PC-9 (cell line): ENCODE measurements at regions of chr6 and their contacts with region 1.

Region 1: GRCh38 chr6:16770701-16771569 is 9.7 kb upstream of the ATXN1 start:
- DNase-seq: peak; percentile 42 to 57
- H3K4me3 ChIP-seq: no peak overlapping the region; the same call in 1 of the 2 replicates
- H3K27ac ChIP-seq: peak overlapping the region; percentile 97
- H3K4me1 ChIP-seq: peaks cover 53% of the 10 kb centered on the region
- H3K27me3 ChIP-seq: no peaks in the 10 kb centered on the region
- CTCF ChIP-seq: peak; percentile 80

Region 2: GRCh38 chr6:16319813-16320532 is 451.0 kb before region 1 on chr6:
- CTCF ChIA-PET with region 1: interaction called, 11 read pairs
- POLR2A ChIA-PET with region 1: no interaction called
- intact Hi-C with region 1: no loop called
- DNase-seq: peak; percentile 61 to 68
- H3K4me3 ChIP-seq: peak overlapping the region; percentile 29; the same call in 1 of the 2 replicates
- H3K27ac ChIP-seq: no peak overlapping the region
- H3K4me1 ChIP-seq: peaks cover 16% of the 10 kb centered on the region
- H3K27me3 ChIP-seq: no peaks in the 10 kb centered on the region
- CTCF ChIP-seq: no peak

Region 3: DNA sequence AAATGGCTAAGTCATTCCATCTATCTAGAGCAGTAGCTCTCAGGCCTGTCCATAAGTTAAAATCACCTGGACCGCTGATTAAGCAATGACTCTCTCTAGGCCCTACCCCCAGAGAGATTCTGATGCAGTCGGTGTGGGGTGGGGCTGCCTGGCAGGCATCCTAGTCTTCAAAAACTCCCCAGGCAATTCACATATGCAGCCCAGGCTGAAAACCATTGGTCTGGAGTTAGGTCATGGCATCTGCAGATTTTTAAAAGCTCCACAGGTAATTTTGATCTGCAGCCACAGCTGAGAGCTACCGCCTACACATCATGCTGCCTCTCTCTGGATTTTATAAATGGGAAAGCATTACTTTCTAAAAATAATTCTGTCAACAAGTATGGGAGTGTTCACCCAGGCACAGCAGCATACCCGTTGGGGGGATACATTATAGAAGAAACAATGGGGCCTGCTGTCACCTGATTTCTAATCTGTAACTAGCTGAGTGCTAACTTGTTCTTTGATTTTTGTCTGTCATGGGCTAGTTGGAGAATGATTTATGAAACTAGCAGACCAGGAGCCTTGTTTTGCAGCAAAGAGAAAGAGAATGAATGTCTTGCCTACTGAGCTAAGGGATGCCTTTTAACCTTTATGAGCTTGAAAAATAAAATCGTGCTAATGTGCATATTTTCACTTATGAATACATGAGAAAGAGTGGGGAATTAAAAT is 34.5 kb after region 1 on chr6:
- CTCF ChIA-PET with region 1: no interaction called
- POLR2A ChIA-PET with region 1: no interaction called
- intact Hi-C with region 1: loop called (anchors 5 kb)
- DNase-seq: peak in 1 of 2 experiments; percentile 63
- H3K4me3 ChIP-seq: no peak overlapping the region
- H3K27ac ChIP-seq: no peak overlapping the region
- H3K4me1 ChIP-seq: peaks cover 13% of the 10 kb centered on the region
- H3K27me3 ChIP-seq: no peaks in the 10 kb centered on the region
- CTCF ChIP-seq: no peak

Region 4: GRCh38 chr6:16849280-16849987 is 78.5 kb after region 1 on chr6:
- CTCF ChIA-PET with region 1: no interaction called
- POLR2A ChIA-PET with region 1: no interaction called
- intact Hi-C with region 1: loop called (anchors 1 kb)
- DNase-seq: peak; percentile 48 to 92
- H3K4me3 ChIP-seq: peak overlapping the region; percentile 43; the same call in 1 of the 2 replicates
- H3K27ac ChIP-seq: peak overlapping the region; percentile 91
- H3K4me1 ChIP-seq: peaks cover 56% of the 10 kb centered on the region
- H3K27me3 ChIP-seq: no peaks in the 10 kb centered on the region
- CTCF ChIP-seq: no peak

Region 5: GRCh38 chr6:16947375-16948015 is 176.6 kb after region 1 on chr6:
- CTCF ChIA-PET with region 1: interaction called, 3 read pairs
- POLR2A ChIA-PET with region 1: no interaction called
- intact Hi-C with region 1: loop called (anchors 1 kb)
- DNase-seq: peak; percentile 70 to 95
- H3K4me3 ChIP-seq: peak overlapping the region; percentile 34; the same call in 1 of the 2 replicates
- H3K27ac ChIP-seq: peak overlapping the region; percentile 92
- H3K4me1 ChIP-seq: peaks cover 23% of the 10 kb centered on the region
- H3K27me3 ChIP-seq: no peaks in the 10 kb centered on the region
- CTCF ChIP-seq: no peak